ENCODE measurements at regions of chr12 and their contacts with region 1.

Region 1: GRCh38 chr12:46465307-46465706 is 92.7 kb upstream of the SLC38A2 start:
- H3K4me3 Mint-ChIP-seq: no peak overlapping the region
- H3K27ac Mint-ChIP-seq: no peak overlapping the region
- H3K4me1 Mint-ChIP-seq: peaks cover 35% of the 10 kb centered on the region
- H3K27me3 Mint-ChIP-seq: no peaks in the 10 kb centered on the region

Region 2: DNA sequence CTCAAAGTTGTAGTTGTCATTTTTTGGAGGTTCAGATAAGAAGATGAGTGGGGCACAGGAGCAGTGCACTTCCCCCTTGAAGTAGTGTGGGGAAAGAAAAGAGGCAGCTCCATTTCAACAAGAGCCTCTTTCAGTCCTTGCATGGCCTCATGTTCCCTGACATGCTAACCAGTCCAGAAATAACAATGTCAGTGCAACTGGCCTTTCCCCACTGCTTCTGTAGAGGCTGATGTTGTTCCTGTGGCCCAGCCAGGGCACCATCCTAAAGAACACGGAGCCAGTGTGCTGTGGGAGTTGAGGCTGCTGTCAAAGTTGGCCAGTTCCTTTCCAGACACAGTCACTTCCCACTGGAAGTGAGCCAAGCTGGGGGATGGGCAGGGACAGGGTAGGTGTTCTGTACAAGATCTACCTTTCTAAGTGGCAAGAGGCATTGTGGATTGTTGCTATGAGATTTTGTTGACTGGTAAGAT is 15.0 kb before region 1 on chr12:
- intact Hi-C with region 1: loop called (anchors 2 kb)
- H3K4me3 Mint-ChIP-seq: no peak overlapping the region
- H3K27ac Mint-ChIP-seq: peak overlapping the region; percentile 32
- H3K4me1 Mint-ChIP-seq: peaks cover 45% of the 10 kb centered on the region
- H3K27me3 Mint-ChIP-seq: no peaks in the 10 kb centered on the region

Region 3: GRCh38 chr12:46770501-46771183 is 305.3 kb after region 1 on chr12:
- intact Hi-C with region 1: no loop called
- H3K4me3 Mint-ChIP-seq: no peak overlapping the region
- H3K27ac Mint-ChIP-seq: no peak overlapping the region
- H3K4me1 Mint-ChIP-seq: peaks cover 5% of the 10 kb centered on the region
- H3K27me3 Mint-ChIP-seq: no peaks in the 10 kb centered on the region